ENCODE measurements at regions of chr11 and their contacts with region 1.

Region 1: DNA sequence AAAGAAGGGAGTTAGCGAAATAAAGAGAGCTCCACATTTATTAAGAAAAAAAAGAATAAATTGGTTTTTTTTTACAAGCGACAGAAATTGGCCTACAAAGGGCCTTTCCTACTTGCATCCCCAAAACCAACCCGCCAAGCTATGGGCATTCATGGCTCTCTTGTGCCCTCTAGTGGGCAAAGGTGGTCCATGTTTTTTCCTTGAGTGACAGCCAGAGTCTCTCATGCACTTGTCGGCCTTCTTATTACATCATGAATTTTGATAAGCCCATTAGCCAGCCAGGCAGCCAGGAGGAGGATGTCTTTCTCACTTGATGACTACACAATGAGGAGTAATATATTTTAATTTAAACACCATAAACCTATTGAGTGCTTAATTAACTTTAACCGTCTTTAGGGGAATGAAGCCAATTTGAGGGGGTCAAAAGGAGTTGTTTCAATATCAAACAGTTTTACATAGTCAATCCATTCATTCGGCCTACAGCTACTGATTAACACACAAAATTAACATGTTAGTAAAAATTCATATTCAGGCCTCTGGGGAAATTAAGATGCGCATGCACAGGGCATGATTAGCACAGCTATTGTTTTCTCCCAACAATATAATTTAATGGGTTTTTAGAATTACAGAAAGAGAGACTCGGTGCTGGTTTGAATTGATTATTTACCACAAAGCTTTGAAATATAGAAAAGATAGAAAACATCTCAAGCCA is 85.5 kb downstream of the RCN1 start:
- DNase-seq: peak; percentile 74
- CTCF ChIP-seq: peak; percentile 91

Region 2: DNA sequence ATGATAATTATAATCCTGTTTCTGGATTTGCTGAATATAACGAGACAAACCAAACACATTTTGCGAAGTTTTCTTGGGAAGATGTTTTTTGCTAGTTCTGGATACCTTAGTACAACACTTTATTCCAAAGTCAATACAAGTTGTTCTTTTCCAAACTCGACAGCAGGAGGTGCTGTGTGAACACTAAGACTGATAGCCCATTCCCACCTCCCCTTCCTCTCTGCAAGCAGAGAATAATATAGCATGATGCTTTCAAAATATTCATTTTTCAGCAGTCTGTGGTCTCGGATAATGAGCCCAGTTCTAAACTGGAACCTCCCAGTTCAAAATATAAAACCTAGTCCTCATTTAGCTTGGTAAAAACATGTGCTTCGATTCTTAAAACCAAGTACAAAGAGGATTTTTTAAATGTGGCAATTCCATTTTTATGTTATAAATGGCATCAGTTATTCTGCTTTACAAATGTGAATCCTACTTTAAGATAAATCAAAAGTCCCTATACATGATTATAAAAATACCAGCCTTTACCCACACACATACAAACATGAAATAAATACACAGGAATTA is 936.0 kb before region 1 on chr11:
- CTCF ChIA-PET with region 1: interaction called, 11 read pairs
- POLR2A ChIA-PET with region 1: no interaction called
- DNase-seq: no peak
- CTCF ChIP-seq: peak; percentile 38

Region 3: GRCh38 chr11:32044158-32044863 is 132.1 kb before region 1 on chr11:
- CTCF ChIA-PET with region 1: interaction called, 256 read pairs
- POLR2A ChIA-PET with region 1: no interaction called
- DNase-seq: no peak
- CTCF ChIP-seq: no peak

Region 4: DNA sequence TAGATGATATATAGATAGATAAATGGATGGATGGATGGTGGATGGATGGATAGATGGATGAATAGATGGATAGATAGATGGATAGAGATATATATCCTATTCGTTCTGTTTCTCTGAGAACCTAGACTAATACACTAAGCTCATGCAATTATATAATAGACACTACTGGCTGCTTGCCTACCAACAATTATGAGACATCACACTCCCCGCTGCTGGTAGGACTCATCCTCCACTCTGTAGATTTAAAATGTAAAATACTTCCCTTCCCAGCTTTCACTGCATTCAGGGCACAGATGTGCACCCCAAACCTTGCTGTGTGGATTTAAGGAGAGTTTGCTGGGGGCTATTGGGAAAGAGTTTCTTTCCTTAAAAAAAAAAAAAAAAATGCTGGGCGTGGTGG is 113.8 kb before region 1 on chr11:
- CTCF ChIA-PET with region 1: interaction called, 14 read pairs
- POLR2A ChIA-PET with region 1: no interaction called
- DNase-seq: no peak
- CTCF ChIP-seq: no peak

Region 5: DNA sequence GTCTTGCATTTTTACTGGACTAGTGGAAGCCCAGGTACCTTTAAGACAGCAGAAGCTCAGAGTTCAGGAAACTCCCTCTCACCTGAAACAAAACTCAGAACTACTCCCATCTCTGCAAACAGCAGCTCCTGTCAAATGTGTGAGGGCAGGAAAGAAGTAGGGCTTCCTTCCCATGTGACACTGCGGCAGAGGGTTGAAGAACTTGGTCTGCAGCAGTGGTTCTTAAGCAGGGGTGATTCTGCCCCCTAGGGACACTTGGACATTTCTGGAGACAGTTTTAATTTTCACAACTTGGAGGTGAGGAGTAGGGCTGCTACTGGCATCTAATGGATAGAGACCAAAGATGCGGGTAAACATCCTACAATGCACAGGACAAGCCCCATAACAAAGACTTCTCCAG is 22.1 kb before region 1 on chr11:
- CTCF ChIA-PET with region 1: interaction called, 27 read pairs
- POLR2A ChIA-PET with region 1: no interaction called
- DNase-seq: no peak
- CTCF ChIP-seq: peak; percentile 18

Region 6: GRCh38 chr11:32200136-32200847 is 23.9 kb after region 1 on chr11:
- CTCF ChIA-PET with region 1: interaction called, 10 read pairs
- POLR2A ChIA-PET with region 1: no interaction called
- DNase-seq: no peak
- CTCF ChIP-seq: no peak